Stomach (tissue), 19 donors: ENCODE measurements at regions of chr1 and their contacts with region 1.

Region 1: DNA sequence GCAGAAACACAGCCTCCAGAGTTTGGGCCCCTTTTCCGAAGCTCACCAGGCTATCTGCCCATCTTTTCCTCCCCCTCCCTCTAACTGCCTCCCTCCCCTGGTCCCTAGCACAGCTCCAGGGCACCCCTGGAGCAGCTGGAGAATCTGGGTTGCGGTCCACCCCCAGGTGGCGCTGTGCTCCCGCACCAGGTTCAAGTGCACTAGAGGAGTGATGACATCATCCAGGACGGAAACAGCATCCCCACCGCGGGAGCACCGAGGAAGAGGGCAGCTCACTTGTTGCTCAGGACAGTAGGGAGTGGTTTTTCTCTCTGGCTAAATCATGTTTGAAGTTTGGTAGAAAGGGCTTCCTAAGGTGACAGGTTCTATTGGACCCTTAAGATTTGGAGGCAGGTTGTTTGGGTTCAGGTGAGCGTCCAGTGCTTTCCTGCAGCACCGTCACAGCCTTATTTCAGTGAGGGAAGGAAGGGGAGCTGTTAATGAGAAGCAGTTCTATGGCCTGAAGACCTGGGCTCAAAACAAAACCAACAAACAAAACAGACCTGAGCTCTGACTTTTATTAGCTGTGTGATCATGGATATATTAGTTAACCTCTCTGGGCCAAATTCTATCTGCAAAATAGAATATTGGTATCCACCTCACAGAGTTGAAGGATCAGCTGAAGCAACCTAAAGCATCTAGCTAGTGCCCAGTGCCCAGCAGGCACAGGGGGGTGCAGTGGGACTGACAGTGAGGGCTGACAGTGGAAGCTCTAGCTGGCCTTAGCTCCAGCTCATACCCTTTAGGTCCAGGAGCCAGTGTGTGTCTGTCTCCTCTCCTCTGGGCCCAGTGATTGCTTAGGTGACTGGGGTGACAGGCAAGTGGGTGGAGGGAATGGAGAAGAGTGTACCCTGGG is 7.5 kb downstream of the SHISA4 start:
- DNase-seq: peak; percentile 89 to 96
- H3K4me3 ChIP-seq: no peak overlapping the region
- H3K27ac ChIP-seq: peak overlapping the region; percentile 7 to 84 (median 72)
- H3K4me1 ChIP-seq: peaks cover 4 to 72% (median 38%) of the 10 kb centered on the region in 4 donors
- H3K27me3 ChIP-seq: no peaks in the 10 kb centered on the region
- CTCF ChIP-seq: peak in 6 of 7 experiments; percentile 45 to 96 (median 94)
- EP300 ChIP-seq: no peak
- POLR2A ChIP-seq: no peak

Region 2: DNA sequence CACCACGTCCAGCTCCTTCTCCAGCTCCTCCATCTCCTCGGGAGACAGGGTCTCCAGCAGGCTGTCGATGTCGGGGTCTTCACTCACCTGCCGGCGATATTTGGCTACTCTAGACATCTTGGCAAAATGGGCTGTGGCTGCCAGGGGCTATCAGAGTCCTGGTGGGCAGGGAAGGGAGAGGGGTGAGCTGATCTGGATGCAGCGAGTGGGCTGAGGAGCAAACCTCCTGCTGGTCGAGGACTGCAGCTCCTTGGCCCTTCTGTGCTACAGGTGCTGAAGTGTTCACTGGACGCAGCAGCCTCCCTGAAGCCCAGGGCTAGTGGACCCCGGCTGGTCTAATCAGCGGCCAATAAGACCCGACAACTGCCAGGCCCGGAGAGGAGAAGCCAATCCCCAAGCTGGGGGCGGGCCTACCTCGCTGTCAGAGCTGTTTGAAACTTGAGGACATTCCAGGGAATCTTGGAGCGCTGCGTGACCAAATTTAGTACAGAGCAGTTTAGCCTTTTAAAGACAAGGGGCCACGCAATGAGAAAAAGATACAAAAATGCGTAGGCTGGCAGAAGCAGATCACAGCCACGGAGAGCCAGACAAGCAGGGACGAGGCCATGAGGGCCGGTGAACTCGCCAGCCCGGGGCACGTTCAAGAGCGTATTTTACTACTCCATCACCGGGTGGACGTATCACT is 50.2 kb after region 1 on chr1 and contains the start of gene LMOD1:
- intact Hi-C with region 1: loop called (anchors 10 kb)
- DNase-seq: peak; percentile 78 to 94
- H3K4me3 ChIP-seq: peak within 1 kb of the TSS; percentile 50 to 62 (median 50)
- H3K27ac ChIP-seq: peak within 1 kb of the TSS; percentile 50 to 91 (median 79)
- H3K4me1 ChIP-seq: peaks cover 5 to 13% (median 7%) of the 10 kb centered on the region in 4 donors
- H3K27me3 ChIP-seq: peaks cover 0 to 42% (median 35%) of the 10 kb centered on the region in 3 donors
- CTCF ChIP-seq: no peak
- EP300 ChIP-seq: no peak
- POLR2A ChIP-seq: peak in 2 of 4 donors; percentile 61 to 75
- total RNA-seq, gene LMOD1: 27.5 to 420 (median 102) TPM

Region 3: GRCh38 chr1:201982623-201983379 is 86.6 kb after region 1 on chr1 and contains the start of gene RNPEP:
- intact Hi-C with region 1: loop called (anchors 5 kb)
- DNase-seq: peak; percentile 74 to 87
- H3K4me3 ChIP-seq: peak within 1 kb of the TSS; percentile 69 to 97 (median 94)
- H3K27ac ChIP-seq: peak within 1 kb of the TSS; percentile 87 to 97 (median 93)
- H3K4me1 ChIP-seq: peaks cover 9 to 33% (median 26%) of the 10 kb centered on the region in 4 donors
- H3K27me3 ChIP-seq: no peaks in the 10 kb centered on the region
- CTCF ChIP-seq: peak in 1 of 7 experiments; percentile 6
- EP300 ChIP-seq: no peak
- POLR2A ChIP-seq: no peak
- total RNA-seq, gene RNPEP: 23.3 to 900 (median 102) TPM